ENCODE measurements at regions of chr17 and their contacts with region 1.

Region 1: GRCh38 chr17:74961657-74962490 is 10.7 kb downstream of the HID1 start:
- DNase-seq: peak; percentile 88
- H3K4me3 Mint-ChIP-seq: no peak overlapping the region
- H3K27ac Mint-ChIP-seq: no peak overlapping the region
- H3K4me1 Mint-ChIP-seq: peaks cover 4% of the 10 kb centered on the region
- H3K27me3 Mint-ChIP-seq: no peaks in the 10 kb centered on the region

Region 2: DNA sequence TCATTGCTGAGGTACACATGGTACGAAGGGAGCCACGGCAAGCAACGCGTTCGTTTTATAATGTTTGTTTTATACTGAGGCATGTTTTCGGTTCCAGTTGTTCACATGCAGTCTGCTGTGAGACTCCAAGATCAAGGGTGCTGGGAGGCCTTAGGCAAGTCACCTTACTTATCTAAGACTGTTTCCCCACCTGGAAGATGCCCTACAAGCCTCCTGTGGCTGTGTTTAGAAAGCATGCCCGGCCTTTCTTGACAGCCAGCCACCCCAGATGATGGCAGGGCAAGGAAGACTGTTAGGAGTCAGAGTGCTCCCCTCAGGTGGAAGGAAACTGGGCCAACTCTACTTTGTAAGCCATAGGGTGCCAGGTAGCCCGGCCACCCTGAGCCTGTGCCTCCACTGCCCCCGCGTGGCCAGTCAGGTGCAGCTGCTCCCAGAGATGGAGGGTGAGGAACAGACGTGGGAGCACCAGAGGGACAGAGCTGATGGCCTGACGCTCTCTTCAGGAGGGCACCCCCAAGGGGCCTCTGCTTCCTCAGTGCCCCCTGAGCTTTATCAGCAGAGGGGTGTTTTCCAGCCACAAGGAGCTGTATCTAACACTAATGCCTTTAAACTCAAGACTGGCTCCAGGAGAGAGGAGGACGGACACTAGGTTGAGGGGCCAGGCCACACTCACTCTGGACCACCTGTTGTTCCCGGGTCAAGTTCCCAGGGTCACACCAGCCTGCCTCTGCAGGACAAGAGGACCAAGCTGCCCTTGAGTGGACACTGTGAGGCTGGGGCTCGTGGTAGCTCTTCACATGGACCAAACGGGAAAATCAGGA is 191.2 kb before region 1 on chr17:
- CTCF ChIA-PET with region 1: no interaction called
- POLR2A ChIA-PET with region 1: no interaction called
- DNase-seq: peak; percentile 74
- H3K4me3 Mint-ChIP-seq: no peak overlapping the region
- H3K27ac Mint-ChIP-seq: peak overlapping the region; percentile 61
- H3K4me1 Mint-ChIP-seq: peaks cover 47% of the 10 kb centered on the region
- H3K27me3 Mint-ChIP-seq: no peaks in the 10 kb centered on the region

Region 3: DNA sequence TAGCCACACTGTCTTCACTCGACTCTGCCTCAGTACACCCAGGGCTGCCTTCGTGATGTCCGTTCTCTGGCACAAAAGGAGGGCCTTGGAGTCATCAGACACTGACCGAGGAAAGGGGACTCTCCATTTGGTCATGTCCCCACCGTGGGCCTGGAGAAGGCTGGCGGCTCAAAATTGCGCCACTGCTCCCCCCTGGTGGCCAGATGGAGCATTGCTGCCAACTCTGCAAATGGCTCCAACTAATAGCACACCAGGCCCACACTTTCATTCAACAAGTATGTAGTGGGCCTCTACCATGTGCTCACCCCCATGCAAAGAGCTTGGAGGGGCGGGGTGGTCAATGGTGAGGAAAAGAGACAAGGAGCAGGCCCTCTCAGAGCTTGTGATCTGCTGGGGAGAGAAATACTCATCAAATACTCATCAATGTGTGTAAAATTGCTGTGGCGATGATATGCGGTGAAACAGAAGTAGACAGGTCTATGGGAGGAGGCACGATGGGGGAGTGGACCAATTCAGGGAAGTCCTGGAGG is 96.9 kb before region 1 on chr17:
- CTCF ChIA-PET with region 1: no interaction called
- POLR2A ChIA-PET with region 1: no interaction called
- DNase-seq: peak; percentile 71
- H3K4me3 Mint-ChIP-seq: no peak overlapping the region
- H3K27ac Mint-ChIP-seq: no peak overlapping the region
- H3K4me1 Mint-ChIP-seq: peaks cover 19% of the 10 kb centered on the region
- H3K27me3 Mint-ChIP-seq: peaks cover 17% of the 10 kb centered on the region

Region 4: DNA sequence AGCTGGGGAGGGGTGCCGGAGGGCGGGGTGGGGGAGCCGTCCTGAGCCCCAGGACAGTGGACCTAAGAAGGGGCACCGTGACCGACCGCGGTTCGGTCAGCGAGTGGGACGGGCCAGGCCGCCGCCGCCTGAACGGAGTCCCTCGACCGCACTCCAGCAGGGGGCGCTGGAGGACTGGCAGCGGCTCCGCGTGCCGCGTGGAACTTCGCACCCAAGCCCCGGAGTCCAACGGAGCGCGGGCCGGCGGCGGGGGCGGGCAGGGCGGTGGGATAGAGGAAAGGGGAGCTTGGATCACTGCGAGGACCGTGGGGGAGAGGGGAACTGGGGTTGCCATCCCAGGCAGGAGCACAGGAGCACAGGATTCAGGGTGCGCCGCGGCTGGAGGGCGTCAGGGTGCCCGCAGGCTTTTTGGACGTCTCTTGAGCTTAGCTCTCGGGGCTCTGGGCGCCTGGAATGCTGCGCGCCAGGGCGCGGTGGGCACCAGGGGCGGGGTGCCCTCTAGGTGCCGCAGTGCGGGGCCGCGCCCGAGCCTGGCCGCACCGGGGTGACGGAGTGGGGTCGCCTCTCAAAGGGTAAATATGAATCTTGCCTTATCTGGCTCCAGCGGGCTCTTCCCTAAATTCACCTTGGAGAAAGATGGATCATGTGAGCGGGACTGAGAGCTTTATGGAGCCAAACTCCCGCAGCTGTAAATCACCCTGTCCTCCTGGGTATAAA is 38.2 kb before region 1 on chr17:
- CTCF ChIA-PET with region 1: interaction called, 27 read pairs
- POLR2A ChIA-PET with region 1: no interaction called
- DNase-seq: peak; percentile 71
- H3K4me3 Mint-ChIP-seq: no peak overlapping the region
- H3K27ac Mint-ChIP-seq: no peak overlapping the region
- H3K4me1 Mint-ChIP-seq: no peaks in the 10 kb centered on the region
- H3K27me3 Mint-ChIP-seq: peaks cover 68% of the 10 kb centered on the region

Region 5: DNA sequence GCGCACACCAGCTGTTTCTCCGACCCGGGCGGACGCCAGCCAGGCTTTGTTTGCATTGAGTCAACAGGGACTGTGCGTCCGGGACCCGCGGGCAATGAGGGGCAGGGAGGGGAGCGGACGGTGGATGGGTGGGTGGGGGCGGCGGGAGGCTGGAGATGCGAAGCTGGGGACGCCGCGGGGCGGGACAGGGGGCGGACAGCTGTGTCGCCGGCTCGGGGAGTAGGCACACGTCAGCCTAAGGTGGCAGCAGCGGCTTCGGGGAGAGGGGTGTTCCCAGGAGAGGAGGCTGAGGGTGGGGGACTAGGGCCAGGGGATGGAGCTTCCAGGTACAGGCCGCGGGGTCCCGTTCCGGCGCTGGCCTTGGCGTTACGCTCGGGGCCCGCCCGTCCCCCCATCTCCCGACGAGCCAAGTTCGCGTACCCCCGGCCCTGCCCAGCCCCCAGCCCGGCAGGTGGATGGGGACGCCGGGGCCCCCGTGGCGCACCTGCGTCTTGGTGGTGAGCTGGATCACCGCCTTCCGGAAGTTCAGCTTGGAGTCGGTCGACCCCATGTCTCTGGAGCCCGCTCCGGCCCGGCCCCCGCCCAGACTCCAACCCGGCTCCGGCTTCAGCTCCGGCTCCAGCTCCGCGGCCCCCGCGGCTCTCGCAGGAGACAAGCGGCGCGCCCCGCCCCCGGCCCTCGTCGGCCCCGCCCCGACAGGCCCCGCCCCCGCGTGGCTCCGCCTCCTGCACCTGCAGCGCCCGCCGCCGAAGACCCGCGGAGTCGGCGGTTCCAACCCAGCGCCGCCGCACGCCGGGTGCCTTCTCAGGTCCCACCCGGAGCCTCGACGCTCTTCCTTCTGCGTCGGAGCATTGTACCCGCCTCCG is 10.5 kb after region 1 on chr17 and contains the start of gene HID1:
- CTCF ChIA-PET with region 1: interaction called, 10 read pairs
- POLR2A ChIA-PET with region 1: no interaction called
- DNase-seq: peak; percentile 72
- H3K4me3 Mint-ChIP-seq: peak within 1 kb of the TSS; percentile 62
- H3K27ac Mint-ChIP-seq: no peak within 1 kb of the TSS
- H3K4me1 Mint-ChIP-seq: peaks cover 6% of the 10 kb centered on the region
- H3K27me3 Mint-ChIP-seq: peaks cover 29% of the 10 kb centered on the region
- total RNA-seq, gene HID1: 0.44 to 0.82 TPM

Region 6: GRCh38 chr17:75077496-75078283 is 115.8 kb after region 1 on chr17:
- CTCF ChIA-PET with region 1: no interaction called
- POLR2A ChIA-PET with region 1: no interaction called
- DNase-seq: peak; percentile 48
- H3K4me3 Mint-ChIP-seq: peak overlapping the region; percentile 44
- H3K27ac Mint-ChIP-seq: peak overlapping the region; percentile 80
- H3K4me1 Mint-ChIP-seq: peaks cover 28% of the 10 kb centered on the region
- H3K27me3 Mint-ChIP-seq: no peaks in the 10 kb centered on the region

Region 7: DNA sequence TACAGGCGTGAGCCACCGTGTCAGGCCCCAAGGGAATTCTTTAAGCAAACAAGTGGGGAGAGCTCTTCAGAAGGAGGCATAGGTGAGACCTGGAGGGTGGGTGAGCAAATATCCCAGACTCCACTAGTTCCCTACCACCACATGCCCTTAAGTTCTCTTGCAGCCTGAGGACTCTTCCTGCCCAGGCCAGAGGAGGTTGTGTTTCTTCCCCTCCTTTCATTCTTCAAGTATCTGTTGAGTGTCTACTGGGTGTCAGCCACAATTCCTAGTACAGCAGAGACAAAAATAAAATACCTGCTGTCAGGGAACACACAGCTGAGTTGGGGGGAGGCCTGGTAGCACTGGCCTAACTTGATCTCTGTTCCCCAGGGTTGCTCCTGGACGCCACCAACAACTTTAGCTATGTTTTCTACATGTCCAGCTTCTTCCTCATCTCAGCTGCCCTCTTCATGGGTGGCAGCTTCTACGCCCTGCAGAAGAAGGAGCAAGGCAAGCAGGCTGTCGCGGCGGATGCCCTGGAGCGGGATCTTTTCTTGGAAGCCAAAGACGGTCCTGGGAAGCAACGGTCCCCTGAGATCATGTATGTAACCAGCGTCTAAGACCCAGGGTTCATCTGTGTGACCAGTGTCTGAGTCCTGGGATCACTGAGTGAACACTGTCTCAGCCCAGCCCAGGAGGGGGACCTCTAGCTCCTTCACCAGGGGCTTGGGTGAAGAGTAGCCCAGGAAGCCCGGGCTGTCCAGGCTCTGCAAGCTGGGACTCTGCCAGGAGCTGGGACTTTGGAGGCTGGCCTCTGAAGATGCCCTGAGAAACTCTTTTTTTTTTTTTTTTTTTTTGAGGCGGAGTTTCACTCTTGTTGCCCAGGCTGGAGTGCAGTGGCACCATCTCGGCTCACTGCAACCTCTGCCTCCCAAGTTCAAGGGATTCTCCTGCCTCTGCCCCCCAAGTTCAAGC is 142.0 kb after region 1 on chr17:
- CTCF ChIA-PET with region 1: interaction called, 4 read pairs
- POLR2A ChIA-PET with region 1: interaction called, 13 read pairs
- DNase-seq: no peak
- H3K4me3 Mint-ChIP-seq: no peak overlapping the region
- H3K27ac Mint-ChIP-seq: no peak overlapping the region
- H3K4me1 Mint-ChIP-seq: peaks cover 8% of the 10 kb centered on the region
- H3K27me3 Mint-ChIP-seq: no peaks in the 10 kb centered on the region